ENCODE measurements at regions of chr6 and their contacts with region 1.

Region 1: DNA sequence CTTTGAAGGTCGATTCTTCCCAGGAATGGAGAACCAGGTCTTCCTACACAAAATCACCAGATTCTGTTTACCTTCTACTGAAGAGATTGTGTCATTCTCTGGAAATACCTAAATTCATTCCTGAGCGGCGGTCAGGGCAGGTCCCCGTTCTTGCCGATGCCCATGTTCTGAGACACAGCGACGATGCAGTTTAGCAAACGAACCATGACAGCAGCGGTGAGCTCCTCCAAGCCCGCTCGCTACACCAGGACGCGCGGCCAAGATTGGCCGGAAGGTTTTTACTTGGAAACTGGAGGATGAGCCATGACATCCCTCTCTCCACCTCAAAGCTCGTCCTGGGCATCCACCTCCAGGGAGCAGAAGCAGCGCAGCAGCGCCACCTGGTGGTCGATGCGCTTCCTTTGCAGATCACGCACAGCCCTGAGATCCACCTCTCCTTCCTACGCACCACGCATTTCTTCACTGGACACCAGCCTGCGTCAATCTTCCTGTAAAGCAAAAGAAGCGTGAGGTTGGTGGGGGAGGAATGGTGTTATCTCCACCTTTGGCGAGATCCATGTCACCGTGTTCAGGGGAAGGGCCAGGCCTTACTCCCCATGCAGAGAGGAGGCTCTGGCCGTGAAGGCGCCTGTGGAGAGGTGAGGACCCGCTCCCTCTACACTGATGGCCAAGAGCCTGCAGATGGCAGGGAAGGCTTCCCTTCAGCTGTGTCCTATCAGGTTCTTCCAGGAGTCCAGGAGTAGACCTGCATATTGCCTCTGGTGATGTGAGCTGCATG is 9.9 kb upstream of the HLA-B start:
- DNase-seq: peak; percentile 37 to 97 (median 81)
- ATAC-seq: peak; percentile 97 to 98 (median 98)
- H3K4me3 ChIP-seq: peak overlapping the region; percentile 46 to 69
- H3K4me3 Mint-ChIP-seq: peak overlapping the region; percentile 75 to 79 (median 75)
- H3K27ac ChIP-seq: no peak overlapping the region
- H3K27ac Mint-ChIP-seq: peak overlapping the region; percentile 0 to 3
- H3K4me1 ChIP-seq: peaks cover 2 to 9% of the 10 kb centered on the region in 2 experiments
- H3K4me1 Mint-ChIP-seq: peaks cover 10 to 28% (median 20%) of the 10 kb centered on the region in 3 donors
- H3K27me3 ChIP-seq: peaks cover 2 to 13% of the 10 kb centered on the region in 2 experiments
- H3K27me3 Mint-ChIP-seq: peaks cover 24 to 29% of the 10 kb centered on the region in 2 donors

Region 2: DNA sequence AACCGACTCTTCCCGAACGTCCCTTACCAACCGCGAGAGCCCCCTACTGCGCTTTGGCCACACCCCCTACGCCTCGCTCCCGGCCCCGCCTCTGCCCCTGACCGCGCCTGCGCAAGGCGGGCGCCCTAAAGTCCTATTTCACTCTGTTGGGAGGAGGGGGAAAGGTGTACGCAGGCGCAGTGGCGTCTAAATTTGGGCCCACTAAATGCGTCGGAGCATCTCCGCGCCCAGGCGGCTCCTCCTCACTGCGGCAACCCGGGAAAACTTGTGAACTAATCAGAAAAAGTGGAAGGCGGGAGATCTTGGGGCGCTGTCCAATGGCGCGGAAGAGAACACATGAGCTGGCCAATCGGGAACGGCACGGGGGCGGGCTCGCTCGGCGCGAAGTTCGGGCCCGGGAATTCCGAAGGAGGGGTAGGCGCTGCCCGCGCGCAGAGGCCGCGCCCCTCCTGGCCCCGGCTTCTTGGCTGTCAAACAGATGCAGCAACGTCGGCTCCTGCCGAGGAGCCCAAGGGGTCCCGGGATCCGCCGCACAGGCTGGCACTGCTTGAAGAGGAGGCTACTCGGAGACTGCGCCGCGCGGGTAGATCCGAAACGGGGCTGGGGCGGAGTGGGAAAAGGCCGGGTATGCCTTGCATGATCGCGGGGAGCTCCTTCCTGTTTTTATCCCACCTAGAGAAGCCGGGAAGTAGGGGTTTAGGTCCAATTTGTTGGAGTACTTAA is 208.6 kb before region 1 on chr6 and contains the start of gene TCF19:
- CTCF ChIA-PET with region 1: interaction called in 1 of 2 experiments, 10 read pairs
- POLR2A ChIA-PET with region 1: no interaction called
- DNase-seq: peak; percentile 97 to 100 (median 98)
- ATAC-seq: peak; percentile 93 to 95 (median 95)
- H3K4me3 ChIP-seq: peak within 1 kb of the TSS; percentile 70 to 93
- H3K4me3 Mint-ChIP-seq: peak within 1 kb of the TSS; percentile 82 to 90 (median 88)
- H3K27ac ChIP-seq: peak within 1 kb of the TSS; percentile 77
- H3K27ac Mint-ChIP-seq: peak within 1 kb of the TSS; percentile 77 to 84
- H3K4me1 ChIP-seq: peaks cover 7 to 23% of the 10 kb centered on the region in 2 experiments
- H3K4me1 Mint-ChIP-seq: peaks cover 24 to 32% (median 27%) of the 10 kb centered on the region in 3 donors
- H3K27me3 ChIP-seq: no peaks in the 10 kb centered on the region
- H3K27me3 Mint-ChIP-seq: no peaks in the 10 kb centered on the region
- total RNA-seq, gene TCF19: 5.9 to 10.8 (median 9.6) TPM

Region 3: GRCh38 chr6:31197559-31198305 is 169.2 kb before region 1 on chr6:
- CTCF ChIA-PET with region 1: interaction called, 3 to 28 read pairs
- POLR2A ChIA-PET with region 1: interaction called in 1 of 2 experiments, 4 read pairs
- DNase-seq: peak; percentile 82 to 98 (median 96)
- ATAC-seq: peak; percentile 78 to 82 (median 78)
- H3K4me3 ChIP-seq: peak overlapping the region; percentile 93 to 100
- H3K4me3 Mint-ChIP-seq: peak overlapping the region; percentile 76 to 88 (median 87)
- H3K27ac ChIP-seq: peak overlapping the region; percentile 100
- H3K27ac Mint-ChIP-seq: peak overlapping the region; percentile 89 to 97
- H3K4me1 ChIP-seq: peaks cover 5 to 59% of the 10 kb centered on the region in 2 experiments
- H3K4me1 Mint-ChIP-seq: peaks cover 60 to 67% (median 65%) of the 10 kb centered on the region in 3 donors
- H3K27me3 ChIP-seq: no peaks in the 10 kb centered on the region
- H3K27me3 Mint-ChIP-seq: no peaks in the 10 kb centered on the region

Region 4: GRCh38 chr6:31453259-31453658 is 86.4 kb after region 1 on chr6:
- CTCF ChIA-PET with region 1: no interaction called
- POLR2A ChIA-PET with region 1: no interaction called
- DNase-seq: no peak
- ATAC-seq: no peak
- H3K4me3 ChIP-seq: no peak overlapping the region
- H3K4me3 Mint-ChIP-seq: no peak overlapping the region
- H3K27ac ChIP-seq: no peak overlapping the region
- H3K27ac Mint-ChIP-seq: no peak overlapping the region
- H3K4me1 ChIP-seq: no peaks in the 10 kb centered on the region
- H3K4me1 Mint-ChIP-seq: no peaks in the 10 kb centered on the region
- H3K27me3 ChIP-seq: no peaks in the 10 kb centered on the region
- H3K27me3 Mint-ChIP-seq: peaks cover 6 to 12% of the 10 kb centered on the region in 2 donors

Measured in T-cell (primary cell).